ENCODE measurements at regions of chr2 and their contacts with region 1.

Region 1: DNA sequence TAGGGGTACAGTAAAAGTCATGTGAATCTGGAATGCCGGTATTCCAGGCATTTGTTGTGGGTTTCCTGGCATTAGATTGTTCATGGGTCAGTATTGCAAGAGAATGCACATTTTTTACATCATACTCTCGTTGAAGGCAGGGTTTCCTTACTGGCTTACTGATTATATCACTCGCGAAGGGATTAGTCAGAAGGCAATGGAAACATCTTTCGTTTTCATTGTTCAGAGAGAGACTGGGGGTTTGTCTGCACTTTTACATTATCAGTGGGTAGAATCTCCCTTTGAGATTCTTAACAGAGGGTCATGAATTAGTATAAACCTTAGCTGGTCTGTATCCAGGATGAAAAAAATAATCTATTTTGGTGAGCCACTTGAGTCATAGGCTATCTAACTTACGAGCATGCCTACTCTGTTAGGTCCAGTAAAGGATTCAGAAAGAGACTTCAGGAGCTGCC is 229.3 kb upstream of the EPAS1 start:
- DNase-seq: no peak
- ATAC-seq: peak; percentile 37 to 80 (median 72)
- H3K4me3 ChIP-seq: no peak overlapping the region
- H3K27ac ChIP-seq: peak overlapping the region in 8 of 10 donors; percentile 19 to 83 (median 52)
- H3K4me1 ChIP-seq: peaks cover 2 to 61% (median 29%) of the 10 kb centered on the region in 9 donors
- H3K27me3 ChIP-seq: no peaks in the 10 kb centered on the region
- CTCF ChIP-seq: no peak

Region 2: GRCh38 chr2:46134531-46135181 is 66.8 kb after region 1 on chr2:
- intact Hi-C with region 1: no loop called
- DNase-seq: peak; percentile 36 to 68
- ATAC-seq: peak; percentile 59 to 87 (median 77)
- H3K4me3 ChIP-seq: no peak overlapping the region
- H3K27ac ChIP-seq: peak overlapping the region; percentile 54 to 85 (median 73)
- H3K4me1 ChIP-seq: peaks cover 5 to 49% (median 32%) of the 10 kb centered on the region in 9 donors
- H3K27me3 ChIP-seq: no peaks in the 10 kb centered on the region
- CTCF ChIP-seq: peak in 1 of 9 donors; percentile 11

Region 3: GRCh38 chr2:46286715-46287114 is 218.8 kb after region 1 on chr2:
- intact Hi-C with region 1: loop called in 4 of 10 experiments (anchors 5 to 10 kb)
- DNase-seq: no peak
- ATAC-seq: no peak
- H3K4me3 ChIP-seq: no peak overlapping the region
- H3K27ac ChIP-seq: no peak overlapping the region
- H3K4me1 ChIP-seq: peaks cover 0 to 12% (median 0%) of the 10 kb centered on the region in 9 donors
- H3K27me3 ChIP-seq: no peaks in the 10 kb centered on the region
- CTCF ChIP-seq: no peak